ENCODE measurements at regions of chr1 and their contacts with region 1.

Region 1: DNA sequence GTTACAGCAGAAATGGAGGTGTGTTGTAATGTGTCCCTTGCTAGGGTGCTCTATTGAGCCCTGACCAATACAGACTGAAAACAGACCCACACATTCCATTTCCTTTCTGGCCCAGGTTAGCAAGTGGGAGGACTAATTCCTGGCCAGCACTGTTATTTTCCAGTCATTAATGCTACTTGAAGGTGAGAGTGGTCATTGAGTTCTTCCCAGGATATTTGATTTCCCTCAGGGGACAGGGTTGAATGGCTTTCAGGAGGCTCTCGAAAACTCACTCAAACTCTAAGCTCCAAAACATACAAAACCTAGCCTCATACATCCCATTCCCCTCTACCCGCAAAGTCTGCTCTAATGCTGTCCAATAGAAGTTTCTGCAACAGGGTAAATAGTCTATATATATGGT is 6.2 kb downstream of the LRRC52 start:
- DNase-seq: no peak
- ATAC-seq: peak in 4 of 8 donors; percentile 36 to 72 (median 66)
- H3K4me3 ChIP-seq: no peak overlapping the region
- H3K27ac ChIP-seq: no peak overlapping the region
- H3K4me1 ChIP-seq: peaks cover 0 to 10% (median 0%) of the 10 kb centered on the region in 9 donors
- H3K27me3 ChIP-seq: peaks cover 0 to 10% (median 0%) of the 10 kb centered on the region in 7 donors
- CTCF ChIP-seq: no peak

Region 2: DNA sequence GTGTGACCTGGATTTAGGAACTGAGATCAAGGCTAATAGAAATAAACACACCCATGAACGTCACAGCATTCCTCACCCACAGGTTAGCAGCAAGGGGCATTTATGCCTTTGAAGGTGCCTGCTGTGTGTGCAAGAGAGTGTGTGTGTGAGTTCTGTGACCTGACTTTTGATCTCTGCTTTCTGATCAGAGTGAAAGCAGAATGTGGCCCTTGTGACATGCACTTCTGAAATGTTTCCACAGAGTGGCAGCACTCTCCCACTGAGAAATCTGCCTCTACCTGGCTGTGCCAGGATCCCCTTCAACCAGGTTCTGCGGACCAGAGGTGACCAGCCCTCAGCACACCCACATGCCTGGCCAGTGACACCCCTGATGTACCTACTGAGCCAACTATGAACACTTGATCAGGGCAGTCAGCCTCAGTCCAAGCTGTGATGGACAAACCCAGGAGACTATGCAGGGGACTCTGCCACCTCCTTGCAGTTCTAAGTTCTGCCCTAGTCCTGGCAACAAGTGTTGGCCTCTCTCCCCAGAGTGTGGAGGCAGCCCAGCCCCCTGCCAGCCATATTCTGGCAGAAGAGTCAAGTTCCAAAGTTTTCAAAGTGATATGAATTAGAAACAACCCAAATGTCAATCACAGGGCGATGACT is 146.0 kb before region 1 on chr1:
- intact Hi-C with region 1: loop called in 1 of 10 experiments (anchors 5 kb)
- DNase-seq: peak in 1 of 2 donors; percentile 24
- ATAC-seq: peak; percentile 25 to 68 (median 57)
- H3K4me3 ChIP-seq: no peak overlapping the region
- H3K27ac ChIP-seq: no peak overlapping the region
- H3K4me1 ChIP-seq: peaks cover 0 to 12% (median 0%) of the 10 kb centered on the region in 9 donors
- H3K27me3 ChIP-seq: peaks cover 0 to 52% (median 0%) of the 10 kb centered on the region in 7 donors
- CTCF ChIP-seq: peak; percentile 44 to 75 (median 71)

Region 3: DNA sequence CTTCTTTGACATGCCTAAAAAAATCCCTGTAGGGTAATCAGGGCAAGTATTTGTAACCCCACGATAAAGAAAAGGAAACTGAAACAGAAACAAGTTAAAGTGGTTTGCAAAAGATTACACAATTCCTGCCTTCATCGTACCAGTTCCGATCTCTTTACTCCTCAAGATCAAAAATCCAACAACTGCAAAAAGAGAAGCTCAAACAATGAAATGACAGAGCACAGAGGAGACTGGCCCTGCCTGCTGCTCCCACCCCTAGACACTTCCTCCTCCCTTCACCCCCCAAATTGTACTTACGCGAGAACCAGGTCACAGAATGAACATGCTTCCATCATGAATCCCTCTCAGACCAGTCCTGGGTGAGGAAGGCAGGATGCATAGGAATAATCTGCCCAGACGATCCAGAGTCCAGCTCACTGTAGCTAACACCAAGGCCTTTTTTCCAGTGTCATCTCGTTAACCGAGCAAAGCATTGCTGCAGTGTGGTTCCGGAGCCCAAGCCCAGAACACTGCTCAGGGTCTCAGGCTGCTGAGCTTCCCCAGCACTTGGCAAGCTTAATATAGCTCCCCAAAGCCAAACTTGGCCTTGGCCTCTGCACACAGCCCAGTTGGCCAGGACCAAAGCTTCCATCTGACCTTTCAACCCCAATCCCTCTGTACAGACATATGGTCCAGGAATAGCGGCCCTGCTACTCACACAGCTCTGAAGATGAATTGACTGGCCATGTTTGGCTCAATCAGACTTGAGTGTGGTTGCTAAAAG is 125.3 kb before region 1 on chr1:
- intact Hi-C with region 1: loop called in 1 of 10 experiments (anchors 5 kb)
- DNase-seq: peak; percentile 37 to 44
- ATAC-seq: peak; percentile 67 to 94 (median 83)
- H3K4me3 ChIP-seq: peak overlapping the region in 6 of 10 donors; percentile 1 to 45 (median 29)
- H3K27ac ChIP-seq: peak overlapping the region in 9 of 10 donors; percentile 39 to 83 (median 62)
- H3K4me1 ChIP-seq: peaks cover 9 to 64% (median 32%) of the 10 kb centered on the region in 9 donors
- H3K27me3 ChIP-seq: no peaks in the 10 kb centered on the region
- CTCF ChIP-seq: no peak

Region 4: GRCh38 chr1:165586435-165586834 is 36.5 kb after region 1 on chr1:
- intact Hi-C with region 1: loop called in 1 of 10 experiments (anchors 5 kb)
- DNase-seq: no peak
- ATAC-seq: no peak
- H3K4me3 ChIP-seq: no peak overlapping the region
- H3K27ac ChIP-seq: no peak overlapping the region
- H3K4me1 ChIP-seq: no peaks in the 10 kb centered on the region
- H3K27me3 ChIP-seq: peaks cover 0 to 61% (median 0%) of the 10 kb centered on the region in 7 donors
- CTCF ChIP-seq: no peak